ENCODE measurements at regions of chr3 and their contacts with region 1.

Region 1: DNA sequence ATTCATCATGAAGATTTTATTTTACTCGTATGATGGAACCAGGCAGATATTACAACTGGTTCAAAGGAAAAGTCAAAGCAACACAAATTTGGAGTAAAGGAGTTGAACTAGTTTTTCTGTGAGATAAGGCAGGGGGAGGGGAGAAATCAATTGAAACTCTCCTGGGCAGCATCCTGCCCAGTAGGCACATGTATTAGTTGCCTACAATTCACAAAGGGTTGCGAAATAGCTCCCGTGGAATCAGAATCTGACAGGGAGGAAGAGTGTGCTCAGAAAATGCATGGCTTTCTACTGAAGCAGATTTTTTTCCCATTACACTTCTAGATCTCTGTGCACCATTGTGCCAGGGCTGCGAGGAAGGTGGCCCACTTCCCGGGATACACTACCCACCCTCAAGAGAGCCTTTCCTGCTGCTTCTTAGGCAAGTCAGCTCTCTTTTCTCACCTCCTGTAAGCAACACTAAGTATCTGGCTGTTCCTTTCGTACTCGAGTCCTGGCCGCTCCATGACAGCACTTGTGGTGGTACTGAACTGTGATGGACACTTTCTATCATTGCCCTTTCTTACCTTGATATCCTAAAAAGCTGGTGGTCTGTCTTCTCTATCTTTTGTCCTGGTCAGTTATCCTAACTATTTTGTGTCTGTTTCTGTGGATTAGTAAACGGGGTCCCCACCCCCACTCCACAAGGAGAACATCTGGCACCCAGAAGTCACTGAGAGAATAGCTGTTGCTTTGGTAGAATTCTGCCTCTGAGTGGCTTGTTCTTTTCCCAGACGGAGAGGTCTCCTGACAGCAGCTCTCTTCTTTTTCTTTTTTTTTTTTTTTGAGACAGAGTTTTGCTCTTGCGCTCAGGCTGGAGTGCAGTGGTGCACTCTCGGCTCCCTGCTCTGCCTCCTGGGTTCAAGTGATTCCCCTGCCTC is 74.8 kb downstream of the RPL39L start:
- DNase-seq: peak; percentile 83
- ATAC-seq: no peak
- H3K4me3 ChIP-seq: peak overlapping the region; percentile 12; the same call in 1 of the 2 replicates
- H3K27ac ChIP-seq: peak overlapping the region; percentile 97
- H3K4me1 ChIP-seq: peaks cover 45% of the 10 kb centered on the region
- H3K27me3 ChIP-seq: no peaks in the 10 kb centered on the region
- CTCF ChIP-seq: no peak

Region 2: GRCh38 chr3:186930641-186931531 is 133.6 kb before region 1 on chr3:
- CTCF ChIA-PET with region 1: interaction called, 3 read pairs
- POLR2A ChIA-PET with region 1: no interaction called
- intact Hi-C with region 1: loop called (anchors 2 kb)
- DNase-seq: peak; percentile 62
- ATAC-seq: peak; percentile 65
- H3K4me3 ChIP-seq: peak overlapping the region; percentile 77
- H3K27ac ChIP-seq: no peak overlapping the region
- H3K4me1 ChIP-seq: peaks cover 6% of the 10 kb centered on the region; the same call in 1 of the 2 replicates
- H3K27me3 ChIP-seq: no peaks in the 10 kb centered on the region
- CTCF ChIP-seq: no peak; the same call in 1 of the 2 replicates

Region 3: GRCh38 chr3:186990878-186991308 is 73.6 kb before region 1 on chr3:
- CTCF ChIA-PET with region 1: no interaction called
- POLR2A ChIA-PET with region 1: no interaction called
- intact Hi-C with region 1: loop called (anchors 2 kb)
- DNase-seq: peak; percentile 94
- ATAC-seq: peak; percentile 89
- H3K4me3 ChIP-seq: no peak overlapping the region
- H3K27ac ChIP-seq: peak overlapping the region; percentile 91
- H3K4me1 ChIP-seq: peaks cover 33% of the 10 kb centered on the region
- H3K27me3 ChIP-seq: no peaks in the 10 kb centered on the region
- CTCF ChIP-seq: no peak

Region 4: GRCh38 chr3:187011915-187012314 is 52.5 kb before region 1 on chr3:
- CTCF ChIA-PET with region 1: no interaction called
- POLR2A ChIA-PET with region 1: interaction called, 3 read pairs
- intact Hi-C with region 1: loop called (anchors 1 kb)
- DNase-seq: no peak
- ATAC-seq: no peak
- H3K4me3 ChIP-seq: no peak overlapping the region
- H3K27ac ChIP-seq: no peak overlapping the region
- H3K4me1 ChIP-seq: peaks cover 14% of the 10 kb centered on the region
- H3K27me3 ChIP-seq: no peaks in the 10 kb centered on the region
- CTCF ChIP-seq: no peak

Region 5: DNA sequence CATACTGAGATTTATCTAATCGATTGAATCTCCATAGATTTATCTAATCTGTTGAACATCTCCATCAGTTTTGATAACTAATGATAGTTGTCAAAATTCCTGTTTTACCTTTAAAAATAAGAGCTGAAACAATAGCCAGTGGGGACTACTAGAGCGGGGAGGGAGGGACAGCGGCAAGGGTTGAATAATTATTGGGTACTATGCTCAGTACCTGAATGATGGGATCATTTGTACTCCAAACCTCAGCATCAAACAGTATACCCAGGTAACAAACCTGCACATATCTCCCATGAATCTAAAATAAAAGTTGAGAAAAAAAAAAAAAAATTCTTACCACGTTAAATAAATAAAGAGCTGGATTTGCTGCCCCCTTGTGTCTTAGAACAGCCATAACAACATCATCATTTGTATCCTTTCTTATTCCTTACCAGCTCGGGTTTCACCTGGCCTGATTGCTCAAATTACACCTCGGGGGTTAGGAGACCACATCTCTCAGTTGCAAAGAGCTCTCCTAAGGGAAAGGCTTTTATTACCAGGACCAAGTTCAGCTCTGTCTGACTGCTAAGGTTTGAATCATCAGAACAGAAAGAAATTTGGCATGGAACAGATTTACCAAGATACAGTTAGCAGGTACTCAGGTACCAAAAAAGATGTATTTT is 100.6 kb after region 1 on chr3:
- CTCF ChIA-PET with region 1: interaction called, 3 read pairs
- POLR2A ChIA-PET with region 1: interaction called, 10 read pairs
- intact Hi-C with region 1: no loop called
- DNase-seq: peak; percentile 82
- ATAC-seq: peak; percentile 81
- H3K4me3 ChIP-seq: no peak overlapping the region
- H3K27ac ChIP-seq: no peak overlapping the region
- H3K4me1 ChIP-seq: peaks cover 5% of the 10 kb centered on the region; the same call in 1 of the 2 replicates
- H3K27me3 ChIP-seq: 0 out of 2 replicates have a peak, but pooled peaks cover 3% of the 10 kb centered on the region
- CTCF ChIP-seq: peak; percentile 80

Measured in PC-3 (cell line).